Activated CD4-positive, alpha-beta T cell treated with anti-CD3 and anti-CD28 coated beads for 36 hours (primary cell): ENCODE measurements at regions of chr5 and their contacts with region 1.

Region 1: DNA sequence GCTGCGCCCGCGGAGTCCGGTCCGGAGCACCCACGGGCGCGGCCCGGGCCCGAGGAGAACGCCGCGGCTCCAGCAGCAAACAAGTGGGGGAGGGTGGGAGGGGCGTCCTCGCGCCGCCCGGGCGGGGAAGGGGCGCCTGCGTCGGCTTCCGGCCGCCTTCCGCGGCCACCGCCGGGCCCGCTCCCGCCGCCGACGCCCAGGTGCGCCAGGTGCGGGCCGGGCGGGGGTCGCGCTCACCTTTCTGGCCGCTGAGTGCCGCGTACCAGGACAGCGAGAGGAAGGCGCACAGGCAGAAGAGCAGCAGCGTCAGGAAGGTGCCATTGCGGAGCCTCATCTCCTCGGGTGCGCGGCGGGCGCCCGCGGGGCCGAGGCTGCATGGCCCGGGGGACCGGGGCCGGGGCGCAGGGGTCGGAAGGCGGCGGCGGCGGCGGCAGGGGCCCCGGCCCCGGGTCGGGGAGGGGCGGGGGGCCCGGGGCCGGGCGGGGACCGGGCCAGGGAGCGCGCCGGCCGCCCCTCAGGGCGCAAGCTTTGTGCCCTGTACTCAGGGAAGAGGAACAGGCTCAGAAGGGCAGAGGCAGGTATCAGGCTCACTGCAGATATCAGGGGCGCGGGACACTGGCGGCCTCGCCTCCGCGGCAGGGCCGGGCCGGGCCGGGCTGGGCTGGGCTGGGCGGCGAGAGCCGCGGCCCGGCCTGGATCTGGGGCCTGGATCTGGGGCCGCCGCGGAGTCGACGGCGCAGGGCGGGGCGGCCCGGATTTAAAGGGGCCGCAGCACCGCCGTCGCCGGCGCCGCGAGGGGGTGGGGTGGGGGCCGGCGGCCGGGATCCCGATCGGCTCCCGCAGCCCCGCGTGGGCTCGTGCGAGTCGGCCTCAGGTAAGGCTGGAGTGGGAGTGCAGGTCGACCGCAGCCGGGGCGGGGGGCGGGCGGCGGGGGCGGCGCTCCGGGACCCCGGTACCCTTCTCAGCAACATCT is at the start of gene MGAT4B:
- DNase-seq: peak; percentile 82
- ATAC-seq: peak; percentile 65
- H3K4me3 Mint-ChIP-seq: peak within 1 kb of the TSS; percentile 82
- H3K27ac Mint-ChIP-seq: peak within 1 kb of the TSS; percentile 25
- H3K4me1 Mint-ChIP-seq: peaks cover 36% of the 10 kb centered on the region
- H3K27me3 Mint-ChIP-seq: no peaks in the 10 kb centered on the region
- total RNA-seq, gene MGAT4B: 52.4 to 62.8 TPM

Region 2: DNA sequence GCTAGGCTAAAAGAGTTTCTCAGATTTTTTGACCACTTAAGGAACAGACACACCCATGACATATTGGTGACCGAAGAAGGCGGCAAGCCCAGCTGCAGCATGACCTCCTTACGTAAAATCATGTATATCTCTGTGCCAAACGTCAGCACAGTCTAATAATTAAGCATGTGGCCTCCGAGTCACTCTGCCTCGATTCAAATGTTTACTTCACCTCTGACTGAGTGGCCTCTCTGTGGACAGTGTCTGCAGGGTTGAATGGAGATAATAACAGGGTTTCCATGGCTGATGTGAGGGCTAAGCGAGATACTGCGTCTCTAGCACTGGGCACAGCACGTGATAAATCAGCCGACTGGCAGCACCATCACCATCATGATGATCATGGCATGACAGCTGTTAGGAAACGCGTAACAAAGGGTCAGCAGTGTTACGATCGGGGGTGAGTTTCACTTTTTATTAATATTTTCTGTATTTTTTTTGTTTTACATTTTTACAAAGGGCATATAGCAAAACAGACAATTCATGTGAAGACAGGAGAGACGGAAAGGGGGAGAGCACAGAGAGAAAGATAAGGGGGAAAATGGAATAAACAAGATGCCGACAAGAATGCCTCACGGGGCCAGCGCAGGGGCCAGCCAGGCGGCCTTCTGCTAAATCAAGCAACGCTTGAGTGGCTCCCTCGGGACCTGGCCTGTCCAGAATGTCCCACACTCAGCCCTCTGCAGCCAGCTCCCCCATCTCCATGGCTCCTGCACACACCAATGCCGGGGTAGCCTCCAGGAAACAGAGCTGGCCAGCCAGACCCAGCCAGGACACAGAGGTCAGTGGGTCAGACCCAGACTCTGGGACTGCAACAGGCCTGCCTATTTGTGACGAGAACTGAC is 521.5 kb before region 1 on chr5:
- CTCF ChIA-PET with region 1: no interaction called
- POLR2A ChIA-PET with region 1: no interaction called
- intact Hi-C with region 1: no loop called
- DNase-seq: no peak
- ATAC-seq: no peak
- H3K4me3 Mint-ChIP-seq: no peak overlapping the region
- H3K27ac Mint-ChIP-seq: no peak overlapping the region
- H3K4me1 Mint-ChIP-seq: no peaks in the 10 kb centered on the region
- H3K27me3 Mint-ChIP-seq: no peaks in the 10 kb centered on the region

Region 3: GRCh38 chr5:179697993-179698934 is 108.3 kb before region 1 on chr5:
- CTCF ChIA-PET with region 1: no interaction called
- POLR2A ChIA-PET with region 1: interaction called, 3 read pairs
- intact Hi-C with region 1: loop called in 1 of 2 experiments (anchors 1 kb)
- DNase-seq: peak; percentile 99
- ATAC-seq: peak; percentile 89
- H3K4me3 Mint-ChIP-seq: peak overlapping the region; percentile 94
- H3K27ac Mint-ChIP-seq: peak overlapping the region; percentile 100
- H3K4me1 Mint-ChIP-seq: peaks cover 34% of the 10 kb centered on the region
- H3K27me3 Mint-ChIP-seq: no peaks in the 10 kb centered on the region

Region 4: DNA sequence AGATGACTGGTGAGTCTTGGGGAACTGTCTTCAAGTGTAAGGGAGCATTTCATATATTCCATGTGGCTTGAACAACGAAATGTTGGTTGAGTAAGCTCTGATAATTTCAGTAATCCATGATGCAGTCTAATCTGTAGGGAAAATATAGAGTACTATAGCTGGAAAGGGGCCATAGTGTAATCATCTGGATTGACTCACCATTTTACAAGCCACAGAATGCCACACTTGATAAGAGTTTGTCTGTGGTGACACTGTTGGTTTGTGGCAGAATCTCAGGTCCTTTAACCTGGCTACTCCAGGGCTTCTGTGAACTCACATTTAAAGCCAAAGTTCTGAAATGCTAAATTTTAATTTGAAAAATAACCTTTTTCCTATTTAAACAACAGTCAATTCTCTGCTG is 90.2 kb before region 1 on chr5:
- CTCF ChIA-PET with region 1: no interaction called
- POLR2A ChIA-PET with region 1: no interaction called
- intact Hi-C with region 1: no loop called
- DNase-seq: no peak
- ATAC-seq: no peak
- H3K4me3 Mint-ChIP-seq: no peak overlapping the region
- H3K27ac Mint-ChIP-seq: peak overlapping the region; percentile 55
- H3K4me1 Mint-ChIP-seq: peaks cover 4% of the 10 kb centered on the region
- H3K27me3 Mint-ChIP-seq: no peaks in the 10 kb centered on the region

Region 5: GRCh38 chr5:179763215-179763945 is 43.2 kb before region 1 on chr5:
- CTCF ChIA-PET with region 1: interaction called, 14 read pairs
- POLR2A ChIA-PET with region 1: no interaction called
- intact Hi-C with region 1: no loop called
- DNase-seq: peak; percentile 70
- ATAC-seq: peak; percentile 30
- H3K4me3 Mint-ChIP-seq: no peak overlapping the region
- H3K27ac Mint-ChIP-seq: no peak overlapping the region
- H3K4me1 Mint-ChIP-seq: peaks cover 79% of the 10 kb centered on the region
- H3K27me3 Mint-ChIP-seq: no peaks in the 10 kb centered on the region

Region 6: GRCh38 chr5:179821581-179822432 is 15.3 kb after region 1 on chr5:
- CTCF ChIA-PET with region 1: interaction called, 10 read pairs
- POLR2A ChIA-PET with region 1: interaction called, 3 read pairs
- intact Hi-C with region 1: loop called (anchors 1 kb)
- DNase-seq: peak; percentile 92
- ATAC-seq: peak; percentile 71
- H3K4me3 Mint-ChIP-seq: peak overlapping the region; percentile 92
- H3K27ac Mint-ChIP-seq: peak overlapping the region; percentile 90
- H3K4me1 Mint-ChIP-seq: peaks cover 38% of the 10 kb centered on the region
- H3K27me3 Mint-ChIP-seq: peaks cover 2% of the 10 kb centered on the region

Region 7: GRCh38 chr5:179858586-179859427 is 52.3 kb after region 1 on chr5 and contains the start of gene MRNIP:
- CTCF ChIA-PET with region 1: interaction called, 12 read pairs
- POLR2A ChIA-PET with region 1: no interaction called
- intact Hi-C with region 1: loop called (anchors 1 to 2 kb)
- DNase-seq: peak; percentile 95
- ATAC-seq: peak; percentile 98
- H3K4me3 Mint-ChIP-seq: peak within 1 kb of the TSS; percentile 84
- H3K27ac Mint-ChIP-seq: peak within 1 kb of the TSS; percentile 85
- H3K4me1 Mint-ChIP-seq: peaks cover 6% of the 10 kb centered on the region
- H3K27me3 Mint-ChIP-seq: no peaks in the 10 kb centered on the region
- total RNA-seq, gene MRNIP: 19.4 to 19.7 TPM

Region 8: DNA sequence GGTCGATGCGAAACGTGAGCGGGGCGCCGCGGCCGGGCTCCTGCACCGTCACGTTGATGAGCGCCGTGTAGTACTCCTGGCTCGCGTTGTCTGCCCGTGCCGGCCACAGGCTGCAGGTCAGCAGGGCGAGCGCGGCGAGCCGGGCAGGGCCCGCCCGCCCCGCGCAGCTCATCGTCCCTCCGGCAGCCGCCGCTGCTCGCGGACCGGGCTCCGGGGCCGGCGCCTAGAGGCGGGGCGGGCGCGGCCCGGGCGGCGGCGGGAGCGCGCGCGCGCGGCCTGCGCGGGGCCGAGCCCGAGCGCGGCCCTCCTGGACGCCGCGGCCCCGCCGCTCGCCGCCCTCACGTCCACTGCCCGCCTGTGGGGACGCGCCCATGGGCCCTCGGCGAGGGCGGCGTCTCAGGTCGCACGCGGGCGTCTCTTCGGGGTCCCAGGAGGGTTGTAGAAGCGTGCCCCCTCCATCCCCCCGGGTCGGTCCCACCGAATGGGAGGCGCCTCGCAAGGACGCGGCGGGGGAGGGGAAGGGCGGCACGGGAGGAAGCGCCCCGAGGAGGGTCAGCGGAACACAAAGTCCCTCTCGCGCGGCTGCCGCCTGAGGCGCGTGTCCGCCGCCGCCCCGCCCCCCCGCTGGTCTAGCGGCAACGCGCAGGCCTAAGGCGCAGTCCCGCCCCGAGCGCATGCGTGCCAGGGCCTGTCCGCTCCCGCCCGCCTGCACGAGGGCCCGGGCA is 265.2 kb after region 1 on chr5 and contains the start of gene RNF130:
- CTCF ChIA-PET with region 1: no interaction called
- POLR2A ChIA-PET with region 1: no interaction called
- intact Hi-C with region 1: loop called in 1 of 2 experiments (anchors 5 kb)
- DNase-seq: peak; percentile 93
- ATAC-seq: peak; percentile 79
- H3K4me3 Mint-ChIP-seq: peak within 1 kb of the TSS; percentile 80
- H3K27ac Mint-ChIP-seq: peak within 1 kb of the TSS; percentile 44
- H3K4me1 Mint-ChIP-seq: peaks cover 29% of the 10 kb centered on the region
- H3K27me3 Mint-ChIP-seq: no peaks in the 10 kb centered on the region
- total RNA-seq, gene RNF130: 10.3 to 13.3 TPM